Posterior vena cava (tissue), 2 donors: ENCODE measurements at regions of chr12 and their contacts with region 1.

Region 1: GRCh38 chr12:57213058-57213715 is 3.4 kb upstream of the NXPH4 start:
- DNase-seq: peak; percentile 97

Region 2: GRCh38 chr12:57238854-57239554 is 25.8 kb after region 1 on chr12:
- intact Hi-C with region 1: loop called in 1 of 2 experiments (anchors 2 kb)
- DNase-seq: peak; percentile 97